ENCODE measurements at regions of chr4 and their contacts with region 1.

Region 1: GRCh38 chr4:93466446-93466845 is 362.1 kb upstream of the ATOH1 start:
- DNase-seq: no peak
- ATAC-seq: no peak
- H3K4me3 ChIP-seq: no peak overlapping the region
- H3K27ac ChIP-seq: no peak overlapping the region
- H3K4me1 ChIP-seq: no peaks in the 10 kb centered on the region
- H3K27me3 ChIP-seq: no peaks in the 10 kb centered on the region
- CTCF ChIP-seq: no peak
- EP300 ChIP-seq: no peak
- POLR2A ChIP-seq: no peak
- RAD21 ChIP-seq: no peak

Region 2: DNA sequence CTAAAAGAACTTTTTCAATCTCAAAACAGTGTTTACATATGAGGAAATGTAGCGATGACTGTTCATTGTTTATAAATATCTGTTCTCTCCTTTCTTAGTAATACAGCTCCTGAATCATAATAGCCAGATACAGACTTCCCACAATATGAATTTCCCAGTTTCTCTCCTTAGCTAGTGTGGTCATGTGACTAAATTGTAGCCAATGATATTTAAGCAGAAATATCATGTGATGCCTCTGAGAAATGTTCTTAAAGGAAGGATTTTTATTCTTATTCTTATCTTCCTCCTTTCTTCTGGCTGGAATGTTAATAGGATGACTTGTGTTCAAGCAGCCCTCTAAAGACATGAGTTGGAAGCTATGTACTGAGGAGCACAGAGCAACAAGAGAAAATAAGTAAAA is 21.6 kb before region 1 on chr4:
- CTCF ChIA-PET with region 1: no interaction called
- POLR2A ChIA-PET with region 1: no interaction called
- in situ Hi-C with region 1: no loop called
- intact Hi-C with region 1: loop called (anchors 1 kb)
- DNase-seq: no peak
- ATAC-seq: no peak
- H3K4me3 ChIP-seq: no peak overlapping the region
- H3K27ac ChIP-seq: no peak overlapping the region
- H3K4me1 ChIP-seq: no peaks in the 10 kb centered on the region
- H3K27me3 ChIP-seq: no peaks in the 10 kb centered on the region
- CTCF ChIP-seq: no peak
- EP300 ChIP-seq: no peak
- POLR2A ChIP-seq: no peak
- RAD21 ChIP-seq: no peak